ENCODE measurements at regions of chr1 and their contacts with region 1.

Region 1: DNA sequence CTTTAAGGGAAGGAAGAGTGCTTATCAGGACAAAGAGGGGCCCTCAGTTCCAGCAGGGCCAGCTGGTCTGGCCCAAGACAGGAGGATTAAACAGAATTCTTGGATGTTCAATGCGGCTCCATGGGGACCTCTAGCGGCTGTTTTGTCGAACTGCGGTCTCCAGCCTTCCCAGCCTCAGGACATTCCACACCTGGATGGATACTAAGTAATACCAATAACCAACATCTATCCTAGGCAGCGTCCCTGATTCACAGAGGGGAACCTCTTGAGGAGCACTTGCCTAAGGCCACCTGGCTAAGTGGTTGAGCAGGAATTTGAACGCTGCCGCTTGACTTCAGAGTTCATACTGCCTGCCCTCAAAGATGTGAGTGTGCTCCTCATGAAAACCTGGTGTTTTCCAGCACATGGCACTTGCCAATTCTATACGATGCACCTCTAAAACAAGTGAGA is 15.5 kb upstream of the CD247 start:
- DNase-seq: peak; percentile 46
- ATAC-seq: peak; percentile 88

Region 2: GRCh38 chr1:167066333-167067122 is 467.3 kb before region 1 on chr1:
- intact Hi-C with region 1: loop called (anchors 5 to 10 kb)
- DNase-seq: peak; percentile 77
- ATAC-seq: peak; percentile 91 to 92

Region 3: GRCh38 chr1:167263819-167264464 is 269.9 kb before region 1 on chr1:
- intact Hi-C with region 1: loop called (anchors 5 to 10 kb)
- DNase-seq: no peak
- ATAC-seq: peak in 1 of 2 donors; percentile 17

Region 4: GRCh38 chr1:167401260-167401873 is 132.5 kb before region 1 on chr1:
- intact Hi-C with region 1: loop called (anchors 5 to 10 kb)
- DNase-seq: peak; percentile 35
- ATAC-seq: peak; percentile 66 to 77

Region 5: GRCh38 chr1:167442124-167442848 is 91.6 kb before region 1 on chr1:
- intact Hi-C with region 1: loop called in 1 of 2 experiments (anchors 5 kb)
- DNase-seq: peak; percentile 90
- ATAC-seq: peak; percentile 93 to 96

Region 6: DNA sequence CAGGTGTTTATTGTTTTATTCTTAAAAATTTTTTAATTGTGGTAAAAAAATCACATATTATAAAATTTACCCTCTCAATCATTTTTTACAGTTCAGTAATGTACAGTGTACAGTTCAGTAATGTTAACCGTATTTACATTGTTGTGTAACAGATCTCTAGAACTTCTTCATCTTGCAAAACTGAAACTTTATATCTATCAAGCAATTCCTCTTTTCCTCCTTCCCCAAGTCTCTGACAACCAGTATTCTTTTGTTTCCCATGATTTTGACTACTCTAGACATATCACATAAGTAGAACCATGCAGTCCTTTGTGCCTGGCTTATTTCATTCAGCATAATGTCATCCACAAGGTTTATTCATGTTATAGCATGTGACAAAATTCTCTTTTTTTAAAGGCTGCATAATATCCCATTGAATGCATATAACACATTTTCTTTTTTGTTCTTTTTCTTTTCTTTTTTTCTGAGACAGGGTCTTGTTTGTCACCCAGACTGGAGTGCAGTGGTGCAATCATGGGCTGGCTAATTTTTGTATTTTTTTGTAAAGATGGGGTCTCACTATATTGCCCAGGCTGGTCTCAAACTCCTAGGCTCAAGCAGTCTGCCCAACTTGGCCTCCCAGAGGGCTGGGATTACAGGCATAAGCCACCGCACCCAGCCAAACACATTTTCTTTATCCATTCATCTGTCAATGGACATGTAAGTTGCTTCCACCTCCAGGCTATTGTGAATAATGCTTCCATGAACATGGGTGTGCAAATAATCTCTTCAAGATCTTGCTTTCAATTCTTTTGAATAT is 78.9 kb after region 1 on chr1:
- intact Hi-C with region 1: no loop called
- DNase-seq: no peak
- ATAC-seq: no peak

Region 7: DNA sequence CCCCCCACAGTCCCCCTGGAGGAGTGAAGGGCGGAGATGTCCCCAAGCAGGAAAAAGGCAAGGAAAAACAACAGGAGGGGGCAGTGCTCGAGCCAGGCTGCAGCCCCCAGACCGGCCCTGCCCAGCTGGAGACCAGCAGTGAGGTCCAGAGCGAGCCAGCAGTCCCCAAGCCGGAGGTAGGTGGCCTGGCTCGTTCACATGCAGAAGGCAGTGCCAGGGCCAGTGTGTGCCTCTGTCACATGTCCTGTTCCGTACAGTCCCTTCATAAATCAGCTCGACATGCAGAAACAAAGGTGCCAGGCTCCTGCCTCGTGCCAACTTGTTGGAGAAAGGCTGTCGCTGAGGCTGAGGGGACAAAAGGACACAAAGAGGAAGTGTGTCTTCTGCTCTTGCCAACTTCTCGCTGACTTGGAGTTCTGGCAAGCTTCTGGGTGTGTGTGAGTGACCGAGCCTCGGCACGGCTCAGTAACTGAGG is 163.8 kb after region 1 on chr1:
- intact Hi-C with region 1: no loop called
- DNase-seq: peak; percentile 81
- ATAC-seq: peak; percentile 92 to 95